PC-9 (cell line): ENCODE measurements at regions of chr17 and their contacts with region 1.

Region 1: GRCh38 chr17:45894022-45894784 is at the start of gene MAPT:
- DNase-seq: peak; percentile 54 to 92
- H3K4me3 ChIP-seq: peak within 1 kb of the TSS; percentile 54
- H3K27ac ChIP-seq: no peak within 1 kb of the TSS
- H3K4me1 ChIP-seq: no peaks in the 10 kb centered on the region
- H3K27me3 ChIP-seq: peaks cover 55% of the 10 kb centered on the region
- CTCF ChIP-seq: peak; percentile 66; the same call in 1 of the 2 replicates
- total RNA-seq, gene MAPT: 0.85 and 1.0 TPM in 2 replicates

Region 2: DNA sequence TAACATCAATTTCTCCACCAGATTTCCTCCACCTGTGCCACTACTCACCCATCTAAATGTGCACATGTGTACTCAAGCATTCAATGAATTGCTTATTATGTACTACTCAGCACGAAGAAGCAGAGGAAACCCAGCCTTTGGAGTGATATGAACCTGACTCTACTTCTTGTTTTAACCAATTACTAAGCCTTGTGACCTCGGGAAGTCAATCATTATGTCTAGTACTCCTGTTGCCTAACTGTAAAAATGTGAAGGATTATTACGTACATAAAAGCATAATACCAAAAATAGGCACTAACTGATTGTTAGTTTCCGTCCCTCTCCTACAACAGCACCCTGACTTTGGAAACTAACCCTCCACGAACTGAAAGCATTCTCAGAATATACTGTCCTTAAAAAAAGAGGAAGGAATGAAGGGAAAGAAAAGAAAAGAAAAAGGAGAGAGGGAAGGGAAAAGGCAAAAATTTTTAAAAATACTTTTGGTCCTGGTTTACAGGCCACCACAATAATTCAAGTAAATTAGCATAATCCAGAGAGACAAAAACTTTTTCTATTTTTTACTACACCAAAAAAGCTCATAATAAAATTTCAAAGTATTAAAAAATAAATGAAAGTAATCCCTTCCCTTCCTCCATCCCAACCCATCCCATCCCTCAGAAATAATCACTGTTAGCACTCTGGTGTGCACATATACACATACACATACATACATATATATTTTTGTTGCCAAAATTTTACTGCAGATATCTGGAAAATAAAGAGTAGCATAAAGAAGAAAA is 245.4 kb after region 1 on chr17:
- CTCF ChIA-PET with region 1: no interaction called
- POLR2A ChIA-PET with region 1: no interaction called
- intact Hi-C with region 1: no loop called
- DNase-seq: no peak
- H3K4me3 ChIP-seq: no peak overlapping the region
- H3K27ac ChIP-seq: no peak overlapping the region; the same call in 1 of the 2 replicates
- H3K4me1 ChIP-seq: 0 out of 2 replicates have a peak, but pooled peaks cover 4% of the 10 kb centered on the region
- H3K27me3 ChIP-seq: no peaks in the 10 kb centered on the region
- CTCF ChIP-seq: no peak

Region 3: GRCh38 chr17:46782250-46782953 is 888.2 kb after region 1 on chr17:
- CTCF ChIA-PET with region 1: no interaction called
- POLR2A ChIA-PET with region 1: interaction called, 11 read pairs
- intact Hi-C with region 1: no loop called
- DNase-seq: peak; percentile 52 to 57
- H3K4me3 ChIP-seq: no peak overlapping the region
- H3K27ac ChIP-seq: no peak overlapping the region
- H3K4me1 ChIP-seq: peaks cover 33% of the 10 kb centered on the region
- H3K27me3 ChIP-seq: no peaks in the 10 kb centered on the region
- CTCF ChIP-seq: peak; percentile 93